ENCODE measurements at regions of chr4 and their contacts with region 1.

Region 1: GRCh38 chr4:1910643-1911042 is 39.5 kb downstream of the NSD2 start:
- DNase-seq: peak; percentile 10
- H3K4me3 ChIP-seq: no peak overlapping the region
- H3K27ac ChIP-seq: no peak overlapping the region
- H3K27me3 ChIP-seq: no peaks in the 10 kb centered on the region
- CTCF ChIP-seq: peak; percentile 87

Region 2: DNA sequence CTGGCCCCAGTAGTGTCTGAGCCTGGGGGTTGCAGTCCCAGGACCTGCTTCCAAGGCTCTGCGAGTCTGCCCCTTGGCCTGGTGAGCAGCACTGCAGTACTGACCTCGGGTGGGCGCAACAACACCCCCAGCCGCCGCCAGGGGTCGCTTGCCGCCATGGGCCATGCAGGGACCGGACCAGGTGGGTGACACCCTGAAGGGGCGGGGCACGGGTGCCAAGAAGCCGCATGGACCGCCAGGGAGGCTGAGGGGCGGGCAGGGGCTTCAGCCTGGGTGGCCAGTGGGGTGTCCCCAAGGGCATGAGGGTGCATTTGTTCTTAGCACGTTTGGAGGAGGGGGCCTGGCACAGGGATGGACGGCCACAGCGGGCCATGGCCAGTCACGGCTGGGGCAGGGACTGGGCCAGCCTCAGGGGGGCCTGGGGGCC is 164.4 kb before region 1 on chr4:
- CTCF ChIA-PET with region 1: interaction called, 28 read pairs
- POLR2A ChIA-PET with region 1: no interaction called
- DNase-seq: no peak
- H3K4me3 ChIP-seq: no peak overlapping the region
- H3K27ac ChIP-seq: no peak overlapping the region
- H3K27me3 ChIP-seq: no peaks in the 10 kb centered on the region
- CTCF ChIP-seq: peak; percentile 86

Region 3: DNA sequence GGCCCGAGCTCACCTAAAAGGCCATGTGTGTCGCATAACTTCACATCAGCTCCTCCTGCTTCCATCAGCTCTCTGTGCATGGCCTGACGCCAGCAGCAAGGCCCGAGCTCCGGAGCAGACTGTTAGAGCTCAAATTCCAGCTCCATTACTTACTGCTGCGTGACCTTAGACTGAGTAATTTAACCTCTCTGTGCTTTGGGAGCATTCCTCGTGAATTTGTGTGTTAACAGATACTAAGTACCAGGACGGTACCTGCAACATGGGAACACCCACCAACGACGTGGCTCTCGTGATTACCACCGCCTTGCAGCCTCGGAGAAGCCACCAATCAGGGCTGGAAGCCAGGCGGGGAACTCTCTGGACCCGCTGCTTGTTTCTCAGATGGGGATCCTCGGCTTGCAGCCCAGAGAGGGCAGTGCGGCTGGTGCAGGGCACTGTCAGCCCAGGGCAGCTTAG is 67.6 kb before region 1 on chr4:
- CTCF ChIA-PET with region 1: interaction called, 12 read pairs
- POLR2A ChIA-PET with region 1: no interaction called
- DNase-seq: peak; percentile 68
- H3K4me3 ChIP-seq: no peak overlapping the region
- H3K27ac ChIP-seq: peak overlapping the region; percentile 75
- H3K27me3 ChIP-seq: no peaks in the 10 kb centered on the region
- CTCF ChIP-seq: no peak